CD8-positive, alpha-beta T cell (primary cell): ENCODE measurements at regions of chr1 and their contacts with region 1.

Region 1: GRCh38 chr1:226634166-226634588 is 85.6 kb downstream of the STUM start:
- DNase-seq: peak; percentile 65 to 91 (median 85)
- ATAC-seq: peak; percentile 74
- H3K4me3 ChIP-seq: no peak overlapping the region
- H3K4me3 Mint-ChIP-seq: peak overlapping the region; percentile 7
- H3K27ac ChIP-seq: peak overlapping the region; percentile 4 to 42
- H3K27ac Mint-ChIP-seq: peak overlapping the region; percentile 87
- H3K4me1 ChIP-seq: peaks cover 59% of the 10 kb centered on the region
- H3K4me1 Mint-ChIP-seq: peaks cover 52% of the 10 kb centered on the region
- H3K27me3 ChIP-seq: no peaks in the 10 kb centered on the region
- H3K27me3 Mint-ChIP-seq: no peaks in the 10 kb centered on the region
- CTCF ChIP-seq: peak; percentile 96

Region 2: DNA sequence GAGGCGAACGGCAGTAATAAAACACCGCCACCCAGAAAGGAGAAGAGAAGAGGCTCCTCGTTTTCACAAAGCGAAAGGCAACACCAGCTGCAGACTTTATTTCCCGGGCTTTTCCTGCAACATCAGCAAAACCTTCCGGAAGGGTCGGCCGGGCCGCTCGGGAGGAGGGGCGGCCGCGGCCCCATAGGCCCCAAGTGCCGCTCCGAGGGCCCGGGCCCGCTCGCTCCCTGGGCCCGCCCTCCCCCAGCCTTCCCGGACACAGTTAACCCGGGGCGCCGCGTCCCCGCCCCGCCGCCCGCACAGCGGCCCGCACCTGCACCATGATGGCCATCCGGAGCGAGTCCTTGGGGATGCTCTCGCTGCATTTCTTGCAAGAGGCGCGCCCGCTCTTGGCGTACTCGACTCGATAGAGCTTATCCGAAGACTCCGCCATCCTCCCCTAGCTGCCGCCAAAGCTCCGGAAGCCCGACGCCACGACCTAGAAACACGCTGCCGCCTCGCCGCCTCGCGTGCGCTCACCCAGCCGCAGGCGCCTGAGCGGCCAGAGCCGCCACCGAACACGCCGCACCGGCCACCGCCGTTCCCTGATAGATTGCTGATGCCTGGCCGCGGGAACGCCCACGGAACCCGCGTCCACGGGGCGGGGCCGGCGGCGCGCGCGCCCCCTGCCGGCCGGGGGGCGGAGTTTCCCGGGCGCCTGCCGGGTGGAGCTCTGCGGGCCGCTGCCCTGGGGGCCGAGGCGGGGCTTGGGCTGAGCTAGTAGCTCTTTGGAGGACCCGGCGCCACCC is 226.5 kb before region 1 on chr1 and contains the start of gene PARP1:
- CTCF ChIA-PET with region 1: no interaction called
- POLR2A ChIA-PET with region 1: no interaction called
- intact Hi-C with region 1: no loop called
- DNase-seq: peak; percentile 78 to 94 (median 86)
- ATAC-seq: peak; percentile 87
- H3K4me3 ChIP-seq: peak within 1 kb of the TSS; percentile 68 to 92
- H3K4me3 Mint-ChIP-seq: peak within 1 kb of the TSS; percentile 94
- H3K27ac ChIP-seq: peak within 1 kb of the TSS; percentile 64 to 65
- H3K27ac Mint-ChIP-seq: peak within 1 kb of the TSS; percentile 90
- H3K4me1 ChIP-seq: peaks cover 45% of the 10 kb centered on the region
- H3K4me1 Mint-ChIP-seq: peaks cover 46% of the 10 kb centered on the region
- H3K27me3 ChIP-seq: no peaks in the 10 kb centered on the region
- H3K27me3 Mint-ChIP-seq: no peaks in the 10 kb centered on the region
- CTCF ChIP-seq: peak; percentile 73
- total RNA-seq, gene PARP1: 38.6 to 46.2 TPM

Region 3: GRCh38 chr1:226656601-226657277 is 22.6 kb after region 1 on chr1:
- CTCF ChIA-PET with region 1: interaction called, 40 read pairs
- POLR2A ChIA-PET with region 1: interaction called, 6 read pairs
- intact Hi-C with region 1: loop called in 1 of 2 experiments (anchors 2 kb)
- DNase-seq: peak in 6 of 9 experiments; percentile 39 to 91 (median 71)
- ATAC-seq: peak; percentile 68
- H3K4me3 ChIP-seq: no peak overlapping the region
- H3K4me3 Mint-ChIP-seq: peak overlapping the region; percentile 61
- H3K27ac ChIP-seq: no peak overlapping the region
- H3K27ac Mint-ChIP-seq: no peak overlapping the region
- H3K4me1 ChIP-seq: no peaks in the 10 kb centered on the region
- H3K4me1 Mint-ChIP-seq: peaks cover 30% of the 10 kb centered on the region
- H3K27me3 ChIP-seq: no peaks in the 10 kb centered on the region
- H3K27me3 Mint-ChIP-seq: no peaks in the 10 kb centered on the region
- CTCF ChIP-seq: no peak

Region 4: DNA sequence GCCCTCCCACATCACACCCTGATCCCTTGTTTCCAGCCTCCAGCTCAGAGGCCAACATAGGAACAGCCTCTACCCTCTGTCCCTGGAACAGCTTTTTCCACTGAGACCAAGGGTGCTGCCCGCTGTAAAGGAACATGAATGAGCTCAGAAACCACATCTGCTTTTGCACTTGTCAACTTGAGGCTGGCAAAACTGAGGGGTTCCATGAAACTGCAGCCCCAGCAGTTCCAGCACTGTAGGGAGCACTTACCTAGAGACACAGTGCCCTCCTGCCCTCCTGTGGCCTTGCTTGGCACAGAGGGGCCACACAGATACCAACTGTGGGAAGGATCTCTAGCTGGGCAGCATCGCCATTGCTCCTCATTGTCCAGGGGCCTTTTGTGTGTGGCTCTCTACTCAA is 53.2 kb after region 1 on chr1:
- CTCF ChIA-PET with region 1: interaction called, 92 read pairs
- POLR2A ChIA-PET with region 1: interaction called, 4 read pairs
- intact Hi-C with region 1: loop called (anchors 1 kb)
- DNase-seq: peak in 6 of 9 experiments; percentile 35 to 81 (median 68)
- ATAC-seq: peak; percentile 22
- H3K4me3 ChIP-seq: no peak overlapping the region
- H3K4me3 Mint-ChIP-seq: peak overlapping the region; percentile 30
- H3K27ac ChIP-seq: peak overlapping the region; percentile 16 to 60
- H3K27ac Mint-ChIP-seq: peak overlapping the region; percentile 99
- H3K4me1 ChIP-seq: peaks cover 100% of the 10 kb centered on the region
- H3K4me1 Mint-ChIP-seq: peaks cover 99% of the 10 kb centered on the region
- H3K27me3 ChIP-seq: no peaks in the 10 kb centered on the region
- H3K27me3 Mint-ChIP-seq: no peaks in the 10 kb centered on the region
- CTCF ChIP-seq: peak; percentile 65

Region 5: DNA sequence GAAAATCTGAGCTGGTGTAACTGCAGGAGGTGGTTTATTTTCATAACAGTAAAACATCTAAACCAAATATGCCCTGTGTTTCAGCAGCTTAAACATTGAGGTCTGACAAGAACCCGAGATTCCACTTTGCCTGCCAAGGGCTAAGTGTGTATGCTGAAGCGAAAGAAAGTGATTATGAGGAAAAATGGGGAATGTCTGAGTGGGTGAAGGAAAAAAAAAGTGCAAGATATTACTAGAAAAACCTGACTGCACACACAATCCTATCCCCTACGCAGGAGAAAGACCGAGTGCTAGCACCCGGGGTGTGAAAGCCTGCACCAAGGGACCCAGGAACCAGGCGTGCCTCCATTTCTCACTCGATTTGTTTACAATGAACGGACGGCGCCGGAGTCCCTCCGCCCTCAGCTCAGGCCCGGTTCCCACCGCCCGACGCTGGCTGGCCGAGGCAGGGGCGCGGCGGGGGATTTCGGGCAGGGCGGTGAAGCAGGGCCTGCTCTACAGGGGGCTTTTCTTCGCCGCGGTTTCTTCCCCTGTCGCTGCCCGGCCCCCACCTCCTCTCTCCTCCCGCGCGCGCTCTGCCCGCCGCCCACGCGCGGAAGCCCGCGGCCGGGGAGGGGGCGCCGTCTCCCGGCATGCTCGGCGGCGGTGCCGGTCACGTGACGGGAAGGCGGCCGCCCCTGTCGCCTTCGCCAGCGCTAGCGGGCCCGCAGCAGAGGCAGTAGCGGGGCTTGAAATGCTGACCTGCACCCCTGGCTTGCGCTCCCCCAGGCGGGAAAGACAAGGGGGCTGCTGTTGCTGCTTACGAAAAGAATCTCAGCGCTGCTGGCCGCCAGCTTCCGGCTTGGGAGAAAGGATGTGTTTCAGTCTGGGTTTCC is 69.0 kb after region 1 on chr1:
- CTCF ChIA-PET with region 1: interaction called, 25 read pairs
- POLR2A ChIA-PET with region 1: interaction called, 3 read pairs
- intact Hi-C with region 1: loop called in 1 of 2 experiments (anchors 2 kb)
- DNase-seq: peak; percentile 56 to 94 (median 80)
- ATAC-seq: peak; percentile 82
- H3K4me3 ChIP-seq: peak overlapping the region; percentile 51 to 54
- H3K4me3 Mint-ChIP-seq: peak overlapping the region; percentile 72
- H3K27ac ChIP-seq: peak overlapping the region; percentile 72 to 92
- H3K27ac Mint-ChIP-seq: peak overlapping the region; percentile 92
- H3K4me1 ChIP-seq: peaks cover 85% of the 10 kb centered on the region
- H3K4me1 Mint-ChIP-seq: peaks cover 88% of the 10 kb centered on the region
- H3K27me3 ChIP-seq: no peaks in the 10 kb centered on the region
- H3K27me3 Mint-ChIP-seq: no peaks in the 10 kb centered on the region
- CTCF ChIP-seq: no peak

Region 6: DNA sequence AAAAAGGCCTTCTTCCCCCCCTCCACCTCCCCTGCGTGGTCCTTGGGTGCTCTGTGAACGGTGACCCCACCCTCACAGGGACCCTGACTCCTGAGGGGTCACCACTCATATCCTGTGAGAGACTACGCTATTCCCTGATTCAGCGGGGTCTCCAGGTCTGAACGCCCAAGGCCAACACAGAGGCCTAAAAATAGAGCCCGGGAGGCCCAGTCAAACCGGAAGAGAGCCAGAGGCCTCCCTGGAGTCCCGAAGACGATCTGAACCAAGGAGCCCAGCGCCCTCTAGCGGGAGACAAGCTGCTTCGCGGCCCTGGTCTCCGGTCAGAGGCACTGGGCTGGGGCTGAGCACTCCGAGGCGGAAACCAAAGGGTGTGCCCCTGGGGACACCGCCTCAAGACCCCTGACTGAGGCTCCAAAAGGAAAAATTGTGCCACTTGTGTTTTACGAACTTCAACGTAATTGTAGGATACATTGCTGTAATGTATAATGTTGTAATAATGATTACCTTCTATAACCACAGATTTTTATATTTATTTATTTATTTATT is 193.9 kb after region 1 on chr1:
- CTCF ChIA-PET with region 1: interaction called, 218 read pairs
- POLR2A ChIA-PET with region 1: interaction called, 6 read pairs
- intact Hi-C with region 1: loop called (anchors 1 kb)
- DNase-seq: peak; percentile 86 to 98 (median 93)
- ATAC-seq: peak; percentile 99
- H3K4me3 ChIP-seq: peak overlapping the region; percentile 3 to 21
- H3K4me3 Mint-ChIP-seq: peak overlapping the region; percentile 58
- H3K27ac ChIP-seq: peak overlapping the region; percentile 46 to 73
- H3K27ac Mint-ChIP-seq: peak overlapping the region; percentile 69
- H3K4me1 ChIP-seq: peaks cover 10% of the 10 kb centered on the region
- H3K4me1 Mint-ChIP-seq: peaks cover 20% of the 10 kb centered on the region
- H3K27me3 ChIP-seq: no peaks in the 10 kb centered on the region
- H3K27me3 Mint-ChIP-seq: no peaks in the 10 kb centered on the region
- CTCF ChIP-seq: peak; percentile 94